Naive thymus-derived CD4-positive, alpha-beta T cell (primary cell): ENCODE measurements at regions of chr3 and their contacts with region 1.

Region 1: DNA sequence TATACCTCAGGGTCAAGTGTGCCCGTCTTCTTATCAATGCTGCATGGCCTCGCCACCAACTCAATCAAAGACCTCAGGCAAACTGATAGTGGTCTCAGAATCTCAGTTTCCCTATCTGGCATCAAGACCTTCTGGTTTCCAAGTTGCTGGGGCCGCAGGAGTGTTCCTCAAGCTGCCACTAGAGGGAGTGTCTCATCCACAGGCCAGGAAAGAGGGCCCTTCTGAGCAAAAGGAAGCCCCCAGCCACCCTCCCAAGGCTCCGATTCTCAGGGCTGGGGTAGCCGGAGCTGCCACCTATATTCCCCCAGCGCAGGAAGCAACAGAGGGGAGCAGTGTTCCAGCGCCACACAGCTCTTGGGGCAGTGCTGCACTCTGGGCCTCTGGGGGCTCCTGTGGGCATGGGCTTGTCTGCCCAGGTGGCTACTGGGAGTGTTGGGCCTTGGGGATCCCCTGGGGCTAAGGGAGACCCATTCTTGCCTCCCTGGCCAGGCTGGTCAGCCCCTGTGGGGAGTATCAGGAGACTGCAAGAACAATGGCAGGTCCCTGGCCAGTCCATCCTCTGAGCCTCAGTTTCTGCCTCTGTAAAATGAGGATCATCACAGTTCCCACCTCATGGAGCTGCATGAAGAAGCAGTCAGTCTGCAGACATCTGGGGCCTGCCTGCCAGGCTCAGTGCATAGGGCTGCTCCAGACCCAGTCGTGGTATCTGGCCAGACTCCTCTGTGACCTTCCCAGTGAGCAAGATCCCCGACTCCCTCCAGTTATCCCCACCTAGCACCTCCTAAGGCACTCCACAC is 23.4 kb upstream of the SEC13 start:
- DNase-seq: peak; percentile 26 to 67 (median 47)
- ATAC-seq: peak; percentile 39
- H3K4me3 ChIP-seq: no peak overlapping the region
- H3K4me3 Mint-ChIP-seq: no peak overlapping the region
- H3K27ac ChIP-seq: no peak overlapping the region
- H3K27ac Mint-ChIP-seq: peak overlapping the region in 1 of 9 donors; percentile 47
- H3K4me1 ChIP-seq: no peaks in the 10 kb centered on the region
- H3K4me1 Mint-ChIP-seq: peaks cover 0 to 2% (median 0%) of the 10 kb centered on the region in 7 donors
- H3K27me3 ChIP-seq: no peaks in the 10 kb centered on the region
- H3K27me3 Mint-ChIP-seq: peaks cover 0 to 6% (median 0%) of the 10 kb centered on the region in 5 donors

Region 2: DNA sequence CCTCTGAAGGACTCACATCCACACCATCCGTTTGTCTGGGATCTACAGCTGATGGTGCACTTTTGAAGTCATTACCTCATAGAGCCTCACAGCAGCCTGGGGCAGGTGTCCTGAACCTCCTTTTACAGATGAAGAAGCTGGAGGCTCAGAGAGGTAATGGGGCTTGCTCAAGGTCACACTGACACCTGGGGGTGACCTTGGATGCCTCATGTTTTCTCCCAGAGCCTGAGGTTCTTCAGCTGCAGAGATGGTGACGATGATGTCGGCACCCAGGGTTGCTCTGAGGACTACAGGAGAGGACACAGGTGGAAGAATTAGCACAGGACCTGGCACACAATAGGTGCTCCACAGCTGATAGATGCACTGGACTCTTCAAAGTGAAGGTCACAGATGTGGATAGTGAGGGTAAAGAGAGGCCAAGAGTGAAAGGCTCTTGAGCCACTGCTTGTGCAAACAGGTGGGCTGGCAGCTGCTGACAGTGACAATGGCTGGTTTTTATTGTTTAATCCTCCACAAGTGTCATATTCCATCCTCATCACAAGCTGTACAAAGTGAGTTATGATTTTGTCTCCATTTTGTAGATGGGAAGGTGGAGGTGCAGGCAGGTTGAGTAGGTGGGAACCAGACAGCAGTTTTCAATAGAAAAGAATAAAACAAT is 178.4 kb after region 1 on chr3:
- CTCF ChIA-PET with region 1: no interaction called
- POLR2A ChIA-PET with region 1: no interaction called
- intact Hi-C with region 1: loop called in 1 of 2 experiments (anchors 1 kb)
- DNase-seq: no peak
- ATAC-seq: no peak
- H3K4me3 ChIP-seq: no peak overlapping the region
- H3K4me3 Mint-ChIP-seq: no peak overlapping the region
- H3K27ac ChIP-seq: no peak overlapping the region
- H3K27ac Mint-ChIP-seq: no peak overlapping the region
- H3K4me1 ChIP-seq: no peaks in the 10 kb centered on the region
- H3K4me1 Mint-ChIP-seq: peaks cover 0 to 1% (median 0%) of the 10 kb centered on the region in 7 donors
- H3K27me3 ChIP-seq: no peaks in the 10 kb centered on the region
- H3K27me3 Mint-ChIP-seq: peaks cover 21 to 42% (median 29%) of the 10 kb centered on the region in 5 donors

Region 3: DNA sequence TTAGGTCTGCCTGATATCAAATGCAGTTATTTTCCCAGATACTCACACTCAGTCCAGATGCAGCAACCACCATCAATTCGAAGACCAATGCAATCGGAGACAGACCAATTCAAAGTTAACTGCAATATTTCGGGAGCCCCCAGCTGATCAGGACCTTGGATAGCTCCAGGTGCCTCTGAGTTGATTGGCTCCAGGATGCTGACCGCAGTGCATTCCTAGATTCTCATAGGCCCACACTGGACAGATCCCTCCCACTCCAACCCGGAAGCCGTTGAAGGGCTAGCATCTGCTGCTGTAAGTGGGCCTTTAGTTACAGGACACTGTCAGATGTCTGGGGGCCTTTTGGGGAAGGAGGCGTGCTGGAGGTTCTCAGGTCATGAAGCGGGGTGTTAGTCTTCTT is 250.6 kb after region 1 on chr3:
- CTCF ChIA-PET with region 1: no interaction called
- POLR2A ChIA-PET with region 1: no interaction called
- intact Hi-C with region 1: no loop called
- DNase-seq: peak in 8 of 9 donors; percentile 7 to 59 (median 38)
- ATAC-seq: peak; percentile 73
- H3K4me3 ChIP-seq: no peak overlapping the region
- H3K4me3 Mint-ChIP-seq: no peak overlapping the region
- H3K27ac ChIP-seq: no peak overlapping the region
- H3K27ac Mint-ChIP-seq: peak overlapping the region in 1 of 9 donors; percentile 4
- H3K4me1 ChIP-seq: no peaks in the 10 kb centered on the region
- H3K4me1 Mint-ChIP-seq: no peaks in the 10 kb centered on the region
- H3K27me3 ChIP-seq: no peaks in the 10 kb centered on the region
- H3K27me3 Mint-ChIP-seq: peaks cover 20 to 41% (median 39%) of the 10 kb centered on the region in 5 donors

Region 4: DNA sequence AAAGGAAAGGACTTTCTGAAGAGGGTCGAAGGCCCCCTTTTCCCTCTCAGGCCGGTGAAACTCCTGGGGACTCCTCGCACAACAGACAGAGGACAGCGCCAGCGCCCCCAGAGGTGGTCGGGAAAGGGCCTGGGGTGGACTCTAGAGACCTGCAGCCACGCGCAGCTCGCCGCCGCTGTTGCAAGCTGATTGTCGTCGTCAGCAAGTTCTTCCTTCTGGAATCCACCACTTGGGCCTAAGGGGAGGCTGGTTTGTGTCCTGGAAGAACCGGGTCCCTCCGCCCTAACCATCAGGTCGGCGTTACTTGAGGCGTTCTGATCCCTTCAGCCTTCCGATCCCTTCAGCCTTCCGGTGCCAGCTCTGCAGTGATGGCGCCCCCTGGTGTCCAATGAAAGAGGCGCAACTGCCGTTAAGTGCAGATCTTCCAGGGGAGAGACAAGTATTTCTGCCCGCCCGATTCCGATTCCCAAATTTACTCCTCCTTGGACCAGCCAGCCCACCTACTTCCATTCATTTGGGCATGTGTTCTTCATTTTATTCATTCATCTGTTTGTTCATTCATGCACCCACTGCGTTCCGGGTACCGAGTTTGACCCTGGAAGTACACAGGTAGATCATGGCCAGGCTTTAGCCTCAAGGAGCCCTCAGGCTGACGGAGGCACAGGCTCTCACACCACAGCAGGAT is 394.5 kb after region 1 on chr3:
- CTCF ChIA-PET with region 1: interaction called, 30 read pairs
- POLR2A ChIA-PET with region 1: no interaction called
- intact Hi-C with region 1: loop called (anchors 1 kb)
- DNase-seq: peak; percentile 31 to 76 (median 58)
- ATAC-seq: peak; percentile 72
- H3K4me3 ChIP-seq: peak overlapping the region; percentile 32
- H3K4me3 Mint-ChIP-seq: peak overlapping the region; percentile 9 to 74 (median 51)
- H3K27ac ChIP-seq: no peak overlapping the region
- H3K27ac Mint-ChIP-seq: peak overlapping the region in 1 of 9 donors; percentile 51
- H3K4me1 ChIP-seq: peaks cover 0 to 6% of the 10 kb centered on the region in 2 donors
- H3K4me1 Mint-ChIP-seq: peaks cover 3 to 16% (median 9%) of the 10 kb centered on the region in 7 donors
- H3K27me3 ChIP-seq: peaks cover 0 to 10% of the 10 kb centered on the region in 2 donors
- H3K27me3 Mint-ChIP-seq: peaks cover 28 to 72% (median 53%) of the 10 kb centered on the region in 5 donors

Region 5: GRCh38 chr3:11021611-11022011 is 677.3 kb after region 1 on chr3:
- CTCF ChIA-PET with region 1: no interaction called
- POLR2A ChIA-PET with region 1: no interaction called
- intact Hi-C with region 1: no loop called
- DNase-seq: no peak
- ATAC-seq: no peak
- H3K4me3 ChIP-seq: no peak overlapping the region
- H3K4me3 Mint-ChIP-seq: no peak overlapping the region
- H3K27ac ChIP-seq: no peak overlapping the region
- H3K27ac Mint-ChIP-seq: no peak overlapping the region
- H3K4me1 ChIP-seq: no peaks in the 10 kb centered on the region
- H3K4me1 Mint-ChIP-seq: no peaks in the 10 kb centered on the region
- H3K27me3 ChIP-seq: no peaks in the 10 kb centered on the region
- H3K27me3 Mint-ChIP-seq: peaks cover 0 to 33% (median 11%) of the 10 kb centered on the region in 5 donors